ENCODE measurements at regions of chr7 and their contacts with region 1.

Region 1: GRCh38 chr7:65722345-65722792 is 150.5 kb upstream of the VKORC1L1 start:
- DNase-seq: peak in 4 of 5 donors; percentile 30 to 48 (median 39)
- ATAC-seq: peak in 3 of 4 donors; percentile 43 to 53 (median 50)
- H3K4me3 ChIP-seq: no peak overlapping the region
- H3K27ac ChIP-seq: no peak overlapping the region
- H3K4me1 ChIP-seq: no peaks in the 10 kb centered on the region
- H3K27me3 ChIP-seq: no peaks in the 10 kb centered on the region
- CTCF ChIP-seq: peak; percentile 69 to 83 (median 76)
- POLR2A ChIP-seq: no peak

Region 2: GRCh38 chr7:65809259-65809981 is 87.1 kb after region 1 on chr7:
- intact Hi-C with region 1: no loop called
- DNase-seq: no peak
- ATAC-seq: no peak
- H3K4me3 ChIP-seq: no peak overlapping the region
- H3K27ac ChIP-seq: no peak overlapping the region
- H3K4me1 ChIP-seq: no peaks in the 10 kb centered on the region
- H3K27me3 ChIP-seq: no peaks in the 10 kb centered on the region
- CTCF ChIP-seq: no peak
- POLR2A ChIP-seq: no peak

Region 3: DNA sequence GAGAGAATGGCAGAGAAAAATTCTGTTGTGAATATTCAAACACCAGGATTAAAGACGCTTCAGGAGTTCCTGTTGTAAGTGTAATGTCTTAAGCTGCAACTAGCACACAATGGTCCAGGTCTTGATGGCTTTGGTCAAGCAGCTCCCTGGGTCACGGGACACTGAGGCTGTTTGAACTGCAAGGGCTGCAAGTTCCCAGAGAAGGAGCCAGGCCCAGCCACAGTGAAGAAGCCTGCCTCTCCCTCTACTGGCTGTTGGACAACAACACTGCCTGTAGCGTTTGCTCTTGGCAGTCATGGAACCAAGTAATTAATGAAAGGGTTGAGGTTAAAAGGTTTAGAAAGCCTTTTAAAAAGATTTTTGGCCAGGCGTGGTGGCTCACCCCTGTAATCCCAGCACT is 291.5 kb after region 1 on chr7:
- intact Hi-C with region 1: loop called in 1 of 10 experiments (anchors 2 kb)
- DNase-seq: peak in 3 of 5 donors; percentile 29 to 56 (median 32)
- ATAC-seq: peak; percentile 62 to 84 (median 75)
- H3K4me3 ChIP-seq: no peak overlapping the region
- H3K27ac ChIP-seq: no peak overlapping the region
- H3K4me1 ChIP-seq: no peaks in the 10 kb centered on the region
- H3K27me3 ChIP-seq: no peaks in the 10 kb centered on the region
- CTCF ChIP-seq: peak in 10 of 12 donors; percentile 14 to 57 (median 34)
- POLR2A ChIP-seq: no peak

Measured in heart left ventricle (tissue), 16 donors.